ENCODE measurements at regions of chr7 and their contacts with region 1.

Region 1: DNA sequence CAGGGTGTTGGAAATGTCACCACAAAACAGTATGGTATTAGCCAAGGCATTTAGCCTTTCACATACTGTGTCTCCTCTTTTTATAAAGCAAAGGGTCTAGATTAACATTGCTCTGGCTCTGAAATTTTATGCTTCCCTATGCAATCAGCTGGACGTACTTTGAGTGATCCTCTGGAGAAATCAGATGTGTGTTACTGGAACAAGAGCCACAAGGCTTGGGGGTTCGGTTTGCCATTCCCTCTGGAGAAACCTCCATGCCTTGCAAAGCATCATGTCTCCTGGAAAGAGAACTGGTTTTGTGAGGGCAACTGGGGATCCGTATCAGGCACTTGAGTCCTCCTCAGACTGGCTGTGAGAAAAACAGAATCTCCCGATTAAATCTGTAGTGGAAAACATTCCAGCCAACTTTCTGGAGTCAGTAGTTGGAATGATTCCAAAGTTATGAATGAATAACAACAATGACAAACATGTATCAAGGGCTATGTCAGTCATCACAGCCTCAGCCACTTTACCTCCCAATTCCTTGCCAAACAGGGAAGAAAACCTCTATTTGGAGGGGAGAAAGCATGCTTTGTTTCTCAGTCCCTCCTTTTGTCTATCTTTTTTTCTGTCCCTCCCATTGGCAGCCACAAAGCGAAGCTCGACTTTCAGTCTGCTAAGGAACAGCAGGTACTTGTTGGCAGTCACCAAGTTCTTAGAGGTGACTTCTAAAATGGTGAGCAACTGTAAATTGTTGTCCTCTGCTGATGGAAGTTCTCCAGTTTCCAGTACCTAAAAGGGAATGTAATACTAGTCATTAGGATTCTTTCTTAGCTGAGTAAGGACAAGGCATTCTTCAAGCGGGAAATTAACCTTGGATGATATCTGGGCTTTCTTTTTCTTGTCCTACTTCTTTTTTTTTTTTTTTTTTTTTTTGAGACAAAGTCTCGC is 864.8 kb upstream of the AUTS2 start:
- DNase-seq: no peak
- ATAC-seq: peak in 1 of 4 donors; percentile 38
- H3K4me3 ChIP-seq: no peak overlapping the region
- H3K27ac ChIP-seq: no peak overlapping the region
- H3K4me1 ChIP-seq: peaks cover 0 to 11% (median 4%) of the 10 kb centered on the region in 3 donors
- H3K27me3 ChIP-seq: no peaks in the 10 kb centered on the region
- CTCF ChIP-seq: no peak

Region 2: DNA sequence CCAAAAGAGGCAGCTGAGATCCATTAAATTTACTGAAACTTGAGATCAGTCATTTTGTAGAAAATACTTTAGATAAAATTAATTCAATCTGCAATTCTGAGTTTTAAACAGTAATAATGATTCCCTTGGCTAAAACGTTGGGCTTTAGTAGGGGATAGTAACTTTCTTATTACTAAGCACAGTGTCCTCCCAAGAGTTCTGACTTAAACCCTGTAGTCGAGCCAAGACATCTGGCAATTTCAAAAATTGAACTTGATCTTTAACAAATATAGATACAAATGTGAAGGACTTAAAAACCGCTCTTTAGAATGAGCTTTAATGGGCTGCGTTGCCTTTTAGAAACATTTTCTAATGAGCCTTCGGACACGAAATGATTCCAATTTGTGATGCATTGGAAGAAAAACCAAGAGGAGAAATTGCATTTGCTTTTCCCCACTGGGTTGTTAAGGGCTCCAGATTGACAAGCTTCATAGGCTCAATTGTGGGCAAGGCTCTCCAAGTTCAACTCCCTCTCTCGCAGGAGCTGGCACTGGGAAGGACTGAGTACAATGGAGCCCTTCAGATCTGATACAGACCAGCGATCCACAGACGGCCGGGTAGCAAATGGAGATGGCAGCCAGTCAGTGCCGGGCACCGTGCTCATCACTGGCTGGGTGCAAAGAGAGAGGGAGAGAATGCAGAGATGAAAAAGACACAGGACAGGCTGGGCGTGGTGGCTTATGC is 56.5 kb before region 1 on chr7:
- intact Hi-C with region 1: loop called in 1 of 3 experiments (anchors 10 kb)
- DNase-seq: no peak
- ATAC-seq: no peak
- H3K4me3 ChIP-seq: no peak overlapping the region
- H3K27ac ChIP-seq: no peak overlapping the region
- H3K4me1 ChIP-seq: no peaks in the 10 kb centered on the region
- H3K27me3 ChIP-seq: no peaks in the 10 kb centered on the region
- CTCF ChIP-seq: no peak